Endothelial cell of umbilical vein (primary cell): ENCODE measurements at regions of chr3 and their contacts with region 1.

Region 1: DNA sequence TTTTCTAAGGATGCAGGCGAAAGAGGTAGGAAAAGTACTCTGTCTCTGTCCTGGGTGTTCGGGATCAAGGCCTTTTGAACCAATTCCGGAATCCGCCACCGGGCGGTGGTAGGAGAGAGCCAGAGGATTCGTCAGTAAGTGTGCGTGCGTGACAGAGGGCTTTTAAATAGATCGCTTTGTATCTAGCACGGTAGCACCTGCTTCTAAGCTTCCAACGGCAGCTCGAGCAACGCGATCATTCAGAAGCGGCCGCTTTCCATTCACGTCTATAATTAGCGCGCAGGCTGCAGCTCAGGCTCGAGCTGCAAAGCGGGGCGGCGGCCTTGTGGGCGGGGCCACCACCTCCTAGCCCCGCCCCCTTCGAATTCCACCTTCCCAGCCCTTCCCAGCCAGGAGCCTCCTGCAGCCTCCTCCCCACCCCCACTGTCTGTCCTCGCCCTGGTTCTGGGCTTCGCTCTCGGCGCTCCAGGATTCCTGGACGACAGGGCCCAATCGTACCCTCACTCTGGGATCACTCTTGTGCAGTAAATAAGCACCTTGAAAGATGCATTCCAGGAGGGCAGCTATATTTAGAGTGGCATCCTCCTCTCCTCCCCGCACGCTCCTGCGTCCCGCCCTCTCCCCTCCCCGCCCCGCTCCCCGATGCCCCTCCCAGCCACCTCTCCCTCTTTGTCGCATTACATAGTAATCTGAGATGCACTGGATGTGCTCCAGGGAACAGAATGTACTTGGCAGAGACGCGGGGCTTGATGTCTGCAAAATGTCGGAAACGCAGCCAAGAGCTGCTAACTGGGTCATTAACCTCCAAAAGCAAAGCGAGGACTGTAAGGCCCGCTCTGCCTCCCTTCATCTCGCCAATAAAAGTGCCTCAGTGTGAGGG is 224.1 kb upstream of the TPRG1 start:
- DNase-seq: peak; percentile 84
- H3K4me3 ChIP-seq: peak overlapping the region in 2 of 3 experiments; percentile 27 to 32
- H3K27ac ChIP-seq: peak overlapping the region; percentile 97
- H3K4me1 ChIP-seq: peaks cover 45% of the 10 kb centered on the region
- H3K27me3 ChIP-seq: no peaks in the 10 kb centered on the region
- CTCF ChIP-seq: peak; percentile 19 to 29
- POLR2A ChIP-seq: no peak

Region 2: GRCh38 chr3:188531210-188531609 is 416.4 kb before region 1 on chr3:
- CTCF ChIA-PET with region 1: interaction called, 3 read pairs
- POLR2A ChIA-PET with region 1: no interaction called
- dilution Hi-C with region 1: no loop called
- intact Hi-C with region 1: loop called (anchors 2 kb)
- DNase-seq: peak; percentile 87
- H3K4me3 ChIP-seq: no peak overlapping the region
- H3K27ac ChIP-seq: peak overlapping the region; percentile 85
- H3K4me1 ChIP-seq: peaks cover 37% of the 10 kb centered on the region
- H3K27me3 ChIP-seq: no peaks in the 10 kb centered on the region
- CTCF ChIP-seq: no peak
- POLR2A ChIP-seq: no peak

Region 3: GRCh38 chr3:188756241-188756640 is 191.4 kb before region 1 on chr3:
- CTCF ChIA-PET with region 1: no interaction called
- POLR2A ChIA-PET with region 1: no interaction called
- dilution Hi-C with region 1: no loop called
- intact Hi-C with region 1: no loop called
- DNase-seq: no peak
- H3K4me3 ChIP-seq: no peak overlapping the region
- H3K27ac ChIP-seq: no peak overlapping the region
- H3K4me1 ChIP-seq: no peaks in the 10 kb centered on the region
- H3K27me3 ChIP-seq: no peaks in the 10 kb centered on the region
- CTCF ChIP-seq: no peak
- POLR2A ChIP-seq: no peak

Region 4: DNA sequence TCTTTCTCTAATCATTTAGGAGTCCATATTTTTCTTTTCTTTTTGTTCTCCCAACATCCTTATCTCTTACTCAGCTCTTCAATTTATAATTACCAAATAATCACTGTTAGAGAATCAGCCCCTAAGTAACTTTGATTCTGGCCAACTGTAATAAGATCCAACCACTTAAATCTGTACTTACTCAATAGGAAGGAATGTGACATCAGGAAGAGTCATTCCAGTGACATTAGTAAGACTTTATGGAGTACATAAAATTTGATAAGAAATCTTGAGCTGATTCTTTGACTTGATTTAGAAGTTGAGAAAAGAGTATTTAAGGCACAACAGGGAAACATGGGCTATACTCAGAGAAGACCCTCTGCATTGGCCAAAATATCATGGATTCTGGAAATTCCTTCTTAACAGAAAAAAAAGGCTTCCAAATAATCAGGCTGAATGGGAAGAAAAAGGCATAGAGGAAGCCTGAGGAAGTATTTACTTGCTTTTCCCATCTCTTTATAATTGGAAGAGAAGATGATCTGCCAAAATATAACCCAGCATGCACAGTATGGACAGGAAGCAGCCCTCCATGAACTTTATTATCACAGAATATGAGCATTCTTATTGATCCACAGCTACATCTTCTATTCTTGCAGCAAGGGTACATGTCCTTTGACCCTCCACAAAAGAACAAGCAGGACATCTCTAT is 65.5 kb before region 1 on chr3:
- CTCF ChIA-PET with region 1: interaction called, 4 read pairs
- POLR2A ChIA-PET with region 1: interaction called, 3 read pairs
- dilution Hi-C with region 1: no loop called
- intact Hi-C with region 1: loop called (anchors 1 kb)
- DNase-seq: peak; percentile 70
- H3K4me3 ChIP-seq: no peak overlapping the region
- H3K27ac ChIP-seq: peak overlapping the region; percentile 74
- H3K4me1 ChIP-seq: peaks cover 37% of the 10 kb centered on the region
- H3K27me3 ChIP-seq: no peaks in the 10 kb centered on the region
- CTCF ChIP-seq: no peak
- POLR2A ChIP-seq: no peak

Region 5: DNA sequence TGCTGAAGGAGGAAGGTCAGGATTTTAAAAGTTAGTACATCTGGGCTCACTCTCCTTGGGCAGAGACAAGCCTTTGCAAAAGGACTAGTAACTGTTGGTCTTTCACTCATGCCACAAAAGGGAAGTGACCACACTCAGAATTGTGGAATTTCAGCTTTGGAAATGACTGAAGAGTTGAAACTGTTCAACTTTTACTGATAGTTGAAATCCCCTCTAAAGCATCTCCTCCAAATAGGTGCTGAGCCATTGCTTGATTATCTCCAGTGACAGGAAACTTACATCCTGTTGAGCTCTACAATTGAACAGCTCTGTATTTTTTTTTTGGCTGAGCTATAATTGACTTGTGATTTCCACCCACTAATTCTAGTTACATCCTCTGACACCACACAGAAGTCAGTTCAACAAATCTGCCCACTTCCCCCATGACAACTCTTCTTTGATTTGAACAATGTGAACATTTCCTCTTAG is 30.7 kb before region 1 on chr3:
- CTCF ChIA-PET with region 1: no interaction called
- POLR2A ChIA-PET with region 1: no interaction called
- dilution Hi-C with region 1: no loop called
- intact Hi-C with region 1: loop called (anchors 1 kb)
- DNase-seq: peak; percentile 37
- H3K4me3 ChIP-seq: no peak overlapping the region
- H3K27ac ChIP-seq: no peak overlapping the region
- H3K4me1 ChIP-seq: peaks cover 27% of the 10 kb centered on the region
- H3K27me3 ChIP-seq: no peaks in the 10 kb centered on the region
- CTCF ChIP-seq: no peak
- POLR2A ChIP-seq: no peak

Region 6: GRCh38 chr3:189056646-189057335 is 109.2 kb after region 1 on chr3:
- CTCF ChIA-PET with region 1: no interaction called
- POLR2A ChIA-PET with region 1: no interaction called
- dilution Hi-C with region 1: no loop called
- intact Hi-C with region 1: no loop called
- DNase-seq: no peak
- H3K4me3 ChIP-seq: no peak overlapping the region
- H3K27ac ChIP-seq: no peak overlapping the region
- H3K4me1 ChIP-seq: no peaks in the 10 kb centered on the region
- H3K27me3 ChIP-seq: no peaks in the 10 kb centered on the region
- CTCF ChIP-seq: no peak
- POLR2A ChIP-seq: no peak